B cell (primary cell): ENCODE measurements at regions of chr1 and their contacts with region 1.

Region 1: DNA sequence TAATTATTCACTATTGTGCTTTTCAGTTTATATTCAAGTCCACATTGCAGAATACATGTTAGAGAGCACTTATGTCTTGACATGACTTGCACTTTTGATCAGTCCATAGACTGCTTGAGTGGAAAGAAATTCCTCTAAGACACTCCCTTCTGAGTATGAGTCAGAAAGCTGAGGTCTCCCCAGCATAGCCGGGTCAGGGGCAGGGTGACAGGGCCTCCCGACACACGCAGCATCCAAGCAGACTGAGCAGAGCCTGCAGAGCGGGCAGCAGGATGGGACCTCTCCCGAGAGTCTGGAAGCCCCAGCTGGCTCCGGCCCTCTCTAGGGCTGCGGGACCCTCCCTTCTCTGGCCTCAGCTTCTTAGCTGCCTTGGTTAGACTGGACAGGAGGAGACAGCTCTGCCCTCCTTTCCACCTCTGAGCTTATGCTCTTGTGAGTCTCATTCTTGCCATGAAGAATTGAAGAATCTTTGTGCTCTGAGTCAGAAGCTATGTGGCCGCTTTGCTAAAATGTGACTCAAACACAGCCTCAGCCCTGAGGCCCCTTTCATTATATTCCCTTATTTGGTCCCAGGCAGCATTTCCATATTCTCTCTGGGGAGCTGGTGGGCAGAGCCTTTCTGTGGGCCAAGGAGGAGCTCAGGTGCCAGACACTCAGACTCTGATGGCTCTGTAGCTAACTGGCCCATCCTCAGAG is 11.2 kb upstream of the CAPN2 start:
- DNase-seq: no peak
- ATAC-seq: no peak
- H3K4me3 ChIP-seq: no peak overlapping the region
- H3K4me3 Mint-ChIP-seq: no peak overlapping the region
- H3K27ac ChIP-seq: no peak overlapping the region
- H3K27ac Mint-ChIP-seq: no peak overlapping the region
- H3K4me1 ChIP-seq: peaks cover 4 to 8% of the 10 kb centered on the region in 2 donors
- H3K4me1 Mint-ChIP-seq: peaks cover 8% of the 10 kb centered on the region
- H3K27me3 ChIP-seq: peaks cover 0 to 10% (median 0%) of the 10 kb centered on the region in 4 experiments
- H3K27me3 Mint-ChIP-seq: peaks cover 24% of the 10 kb centered on the region
- CTCF ChIP-seq: no peak

Region 2: GRCh38 chr1:224052772-224053171 is 351.7 kb after region 1 on chr1:
- CTCF ChIA-PET with region 1: interaction called, 14 read pairs
- POLR2A ChIA-PET with region 1: no interaction called
- intact Hi-C with region 1: loop called (anchors 2 kb)
- DNase-seq: no peak
- ATAC-seq: no peak
- H3K4me3 ChIP-seq: no peak overlapping the region
- H3K4me3 Mint-ChIP-seq: no peak overlapping the region
- H3K27ac ChIP-seq: no peak overlapping the region
- H3K27ac Mint-ChIP-seq: no peak overlapping the region
- H3K4me1 ChIP-seq: peaks cover 0 to 3% of the 10 kb centered on the region in 2 donors
- H3K4me1 Mint-ChIP-seq: peaks cover 2% of the 10 kb centered on the region
- H3K27me3 ChIP-seq: peaks cover 0 to 3% (median 1%) of the 10 kb centered on the region in 4 experiments
- H3K27me3 Mint-ChIP-seq: peaks cover 19% of the 10 kb centered on the region
- CTCF ChIP-seq: no peak